Activated CD8-positive, alpha-beta T cell treated with anti-CD3 and anti-CD28 coated beads for 36 hours (primary cell): ENCODE measurements at regions of chr2 and their contacts with region 1.

Region 1: GRCh38 chr2:53970724-53971602 is at the start of gene PSME4:
- DNase-seq: peak; percentile 95
- ATAC-seq: peak; percentile 90
- H3K4me3 Mint-ChIP-seq: peak within 1 kb of the TSS; percentile 91
- H3K27ac Mint-ChIP-seq: peak within 1 kb of the TSS; percentile 97
- H3K4me1 Mint-ChIP-seq: peaks cover 39% of the 10 kb centered on the region
- H3K27me3 Mint-ChIP-seq: no peaks in the 10 kb centered on the region
- CTCF ChIP-seq: no peak
- total RNA-seq, gene PSME4: 51.7 to 54.4 TPM

Region 2: GRCh38 chr2:53987336-53987921 is 16.5 kb after region 1 on chr2:
- CTCF ChIA-PET with region 1: no interaction called
- POLR2A ChIA-PET with region 1: interaction called, 11 read pairs
- intact Hi-C with region 1: no loop called
- DNase-seq: no peak
- ATAC-seq: peak; percentile 55
- H3K4me3 Mint-ChIP-seq: no peak overlapping the region
- H3K27ac Mint-ChIP-seq: peak overlapping the region; percentile 14
- H3K4me1 Mint-ChIP-seq: peaks cover 17% of the 10 kb centered on the region
- H3K27me3 Mint-ChIP-seq: no peaks in the 10 kb centered on the region
- CTCF ChIP-seq: no peak

Region 3: GRCh38 chr2:54041135-54041534 is 70.2 kb after region 1 on chr2:
- CTCF ChIA-PET with region 1: no interaction called
- POLR2A ChIA-PET with region 1: interaction called, 15 read pairs
- intact Hi-C with region 1: no loop called
- DNase-seq: peak; percentile 87
- ATAC-seq: peak; percentile 98
- H3K4me3 Mint-ChIP-seq: no peak overlapping the region
- H3K27ac Mint-ChIP-seq: no peak overlapping the region
- H3K4me1 Mint-ChIP-seq: no peaks in the 10 kb centered on the region
- H3K27me3 Mint-ChIP-seq: no peaks in the 10 kb centered on the region
- CTCF ChIP-seq: no peak